GM12878 (cell line): ENCODE measurements at regions of chr1 and their contacts with region 1.

Region 1: GRCh38 chr1:62436466-62437256 is at the start of gene USP1:
- DNase-seq: peak; percentile 99
- ATAC-seq: peak; percentile 85
- H3K4me3 ChIP-seq: peak within 1 kb of the TSS; percentile 88
- H3K27ac ChIP-seq: peak within 1 kb of the TSS; percentile 95
- H3K4me1 ChIP-seq: no peaks in the 10 kb centered on the region
- H3K27me3 ChIP-seq: no peaks in the 10 kb centered on the region
- CTCF ChIP-seq: no peak
- EP300 ChIP-seq: 0 out of 4 replicates have a peak, but pooled peaks of 1 of the 2 experiments have one; percentile 7
- POLR2A ChIP-seq: peak; percentile 92
- RAD21 ChIP-seq: no peak
- polyA plus RNA-seq, gene USP1: 28.0 to 35.9 TPM

Region 2: DNA sequence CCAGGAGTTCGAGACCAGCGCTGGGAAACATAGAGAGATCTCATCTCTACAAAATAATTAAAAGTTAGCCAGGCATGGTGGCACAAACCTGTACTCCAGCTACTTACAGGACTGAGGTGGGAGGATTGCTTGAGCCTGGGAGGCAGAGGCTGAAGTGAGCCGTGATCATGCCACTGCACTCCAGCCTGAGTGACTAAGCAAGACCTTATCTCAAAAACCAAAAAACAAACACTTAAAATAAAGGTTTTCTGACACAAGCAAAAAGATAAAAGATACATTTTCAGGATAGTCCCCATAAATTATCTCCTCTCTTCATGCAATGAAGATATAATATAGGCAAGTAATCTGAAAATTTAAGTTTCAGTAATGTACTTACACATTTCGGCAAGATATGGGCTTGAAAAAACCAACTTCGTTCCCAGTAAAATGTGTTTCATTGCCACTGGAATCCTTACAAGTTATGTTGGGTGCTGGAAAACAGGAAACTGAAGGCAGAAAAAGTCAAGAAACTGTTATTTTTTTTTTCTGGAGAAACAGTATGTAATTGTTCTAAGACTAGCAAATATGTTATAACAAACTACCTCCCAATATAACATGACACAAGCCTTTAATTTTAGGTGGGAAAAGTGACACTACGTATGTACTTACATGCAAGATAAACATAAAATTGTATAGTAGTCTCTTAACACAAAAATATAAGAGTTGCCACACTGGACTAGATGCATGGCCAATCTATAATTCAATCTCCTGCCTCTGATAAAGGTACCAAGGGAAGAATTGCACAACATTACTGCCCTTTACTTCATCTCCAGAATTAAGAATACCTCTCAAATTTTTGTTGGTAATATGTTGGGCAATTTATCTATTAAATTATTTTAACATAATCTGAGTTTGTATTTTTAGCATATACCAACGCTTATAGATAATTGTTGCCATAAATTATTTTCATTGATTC is 727.4 kb before region 1 on chr1:
- CTCF ChIA-PET with region 1: no interaction called
- POLR2A ChIA-PET with region 1: no interaction called
- RAD21 ChIA-PET with region 1: no interaction called
- SMC1A ChIA-PET with region 1: no interaction called
- in situ Hi-C with region 1: no loop called
- intact Hi-C with region 1: no loop called
- DNase-seq: no peak
- ATAC-seq: no peak
- H3K4me3 ChIP-seq: no peak overlapping the region
- H3K27ac ChIP-seq: no peak overlapping the region
- H3K4me1 ChIP-seq: no peaks in the 10 kb centered on the region
- H3K27me3 ChIP-seq: no peaks in the 10 kb centered on the region
- CTCF ChIP-seq: no peak
- EP300 ChIP-seq: no peak
- POLR2A ChIP-seq: no peak
- RAD21 ChIP-seq: no peak

Region 3: DNA sequence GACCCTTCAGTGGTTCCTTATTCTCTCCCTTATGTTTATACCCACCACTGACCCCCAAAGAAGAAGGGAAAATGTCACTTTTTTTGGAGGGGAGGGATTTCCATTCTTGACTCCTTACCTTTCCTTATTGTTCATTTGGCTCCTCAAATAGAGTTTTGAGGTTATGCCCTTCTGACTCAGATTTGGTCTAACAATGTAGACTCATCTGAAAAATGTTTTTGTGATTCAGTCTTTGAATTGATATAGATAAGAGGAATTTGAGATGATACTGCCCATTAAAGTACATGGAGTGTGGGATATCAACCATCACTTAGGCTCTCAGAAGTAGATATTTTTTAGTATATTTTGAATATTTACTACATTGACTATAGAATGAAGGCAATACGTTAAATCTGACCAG is 16.3 kb after region 1 on chr1:
- CTCF ChIA-PET with region 1: interaction called, 6 read pairs
- POLR2A ChIA-PET with region 1: interaction called, 7 read pairs
- RAD21 ChIA-PET with region 1: interaction called, 3 read pairs
- SMC1A ChIA-PET with region 1: interaction called, 20 read pairs
- in situ Hi-C with region 1: no loop called
- intact Hi-C with region 1: no loop called
- DNase-seq: no peak
- ATAC-seq: no peak
- H3K4me3 ChIP-seq: no peak overlapping the region
- H3K27ac ChIP-seq: no peak overlapping the region
- H3K4me1 ChIP-seq: peaks cover 7% of the 10 kb centered on the region; the same call in 1 of the 2 replicates
- H3K27me3 ChIP-seq: no peaks in the 10 kb centered on the region
- CTCF ChIP-seq: no peak
- EP300 ChIP-seq: no peak
- POLR2A ChIP-seq: no peak
- RAD21 ChIP-seq: no peak

Region 4: GRCh38 chr1:62500210-62500609 is 63.5 kb after region 1 on chr1:
- CTCF ChIA-PET with region 1: no interaction called
- POLR2A ChIA-PET with region 1: no interaction called
- RAD21 ChIA-PET with region 1: no interaction called
- SMC1A ChIA-PET with region 1: no interaction called
- in situ Hi-C with region 1: no loop called
- intact Hi-C with region 1: no loop called
- DNase-seq: no peak
- ATAC-seq: no peak
- H3K4me3 ChIP-seq: no peak overlapping the region
- H3K27ac ChIP-seq: no peak overlapping the region
- H3K4me1 ChIP-seq: no peaks in the 10 kb centered on the region
- H3K27me3 ChIP-seq: no peaks in the 10 kb centered on the region
- CTCF ChIP-seq: no peak
- EP300 ChIP-seq: no peak
- POLR2A ChIP-seq: no peak
- RAD21 ChIP-seq: no peak

Region 5: DNA sequence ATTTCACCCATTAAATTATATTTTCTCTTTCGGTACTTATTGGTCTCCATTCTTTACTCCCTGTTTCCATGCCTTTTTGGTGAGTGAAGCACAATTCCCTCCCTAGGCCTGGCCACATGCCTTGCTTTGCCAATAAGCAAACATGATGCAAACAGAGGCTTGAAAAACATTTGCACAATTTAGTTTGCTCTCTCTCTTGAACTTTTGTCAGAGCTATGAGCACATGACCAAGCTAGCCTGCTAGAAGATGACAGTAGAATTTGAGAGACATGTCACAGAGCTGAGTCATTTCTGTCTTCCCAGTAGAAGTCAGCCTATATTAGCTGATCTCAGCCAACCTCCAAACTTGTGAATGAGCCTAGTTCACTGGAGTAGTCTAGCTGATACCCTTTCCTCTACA is 185.2 kb after region 1 on chr1:
- CTCF ChIA-PET with region 1: no interaction called
- POLR2A ChIA-PET with region 1: no interaction called
- RAD21 ChIA-PET with region 1: interaction called, 3 read pairs
- SMC1A ChIA-PET with region 1: interaction called, 3 read pairs
- in situ Hi-C with region 1: no loop called
- intact Hi-C with region 1: loop called (anchors 5 kb)
- DNase-seq: peak; percentile 60
- ATAC-seq: peak; percentile 94
- H3K4me3 ChIP-seq: no peak overlapping the region
- H3K27ac ChIP-seq: no peak overlapping the region
- H3K4me1 ChIP-seq: no peaks in the 10 kb centered on the region; the same call in 1 of the 2 replicates
- H3K27me3 ChIP-seq: no peaks in the 10 kb centered on the region
- CTCF ChIP-seq: no peak
- EP300 ChIP-seq: peak; percentile 46 to 55; a peak in 2 of 4 replicates
- POLR2A ChIP-seq: no peak
- RAD21 ChIP-seq: no peak

Region 6: DNA sequence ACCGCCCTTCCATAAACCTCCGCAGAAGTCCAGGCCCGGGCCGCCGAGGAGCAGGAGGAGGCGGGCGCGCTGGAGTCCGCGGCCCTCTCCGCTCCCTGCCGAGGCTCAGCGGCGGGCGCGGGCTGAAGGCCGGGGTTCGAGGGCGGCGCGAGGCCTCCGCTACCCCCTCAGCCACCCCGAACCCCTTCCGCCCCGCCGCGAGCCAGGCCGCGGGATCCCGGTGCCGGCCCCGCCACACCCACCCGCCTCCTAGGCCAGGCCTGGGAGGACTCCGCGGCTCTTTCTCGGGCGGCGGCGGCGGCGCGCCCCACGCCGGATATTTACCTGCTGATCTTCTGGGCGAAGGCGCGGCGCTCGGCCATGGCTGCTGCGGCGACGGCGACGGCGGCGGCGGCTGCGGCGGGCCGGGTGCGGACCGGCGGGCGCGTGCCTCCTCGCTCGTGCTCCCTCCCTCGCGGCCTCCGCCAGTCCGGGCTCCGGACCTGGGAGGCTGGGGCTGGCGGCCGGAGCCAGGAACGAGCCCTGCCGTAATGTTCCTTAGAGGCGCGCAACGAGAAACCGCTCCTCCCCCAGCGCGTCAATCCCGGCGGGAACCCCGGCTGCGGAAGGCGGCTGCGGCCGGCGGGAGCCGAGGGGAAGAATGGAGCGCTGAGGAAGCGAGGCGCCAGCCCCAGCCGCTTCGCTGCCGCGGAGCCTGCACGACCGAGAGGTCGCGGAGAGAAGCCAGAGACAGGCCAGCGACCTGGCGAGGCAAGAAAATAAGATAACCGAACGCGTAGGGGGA is 251.4 kb after region 1 on chr1 and contains the start of gene DOCK7:
- CTCF ChIA-PET with region 1: no interaction called
- POLR2A ChIA-PET with region 1: no interaction called
- RAD21 ChIA-PET with region 1: interaction called, 3 read pairs
- SMC1A ChIA-PET with region 1: interaction called, 7 read pairs
- in situ Hi-C with region 1: no loop called
- intact Hi-C with region 1: loop called (anchors 2 kb)
- DNase-seq: no peak
- ATAC-seq: peak; percentile 77
- H3K4me3 ChIP-seq: peak within 1 kb of the TSS; percentile 87
- H3K27ac ChIP-seq: peak within 1 kb of the TSS; percentile 83
- H3K4me1 ChIP-seq: peaks cover 4% of the 10 kb centered on the region; the same call in 1 of the 2 replicates
- H3K27me3 ChIP-seq: no peaks in the 10 kb centered on the region
- CTCF ChIP-seq: no peak
- EP300 ChIP-seq: no peak
- POLR2A ChIP-seq: peak; percentile 77
- RAD21 ChIP-seq: no peak
- polyA plus RNA-seq, gene DOCK7: 4.8 to 7.0 TPM

Region 7: GRCh38 chr1:62725255-62725654 is 288.6 kb after region 1 on chr1:
- CTCF ChIA-PET with region 1: interaction called, 3 read pairs
- POLR2A ChIA-PET with region 1: no interaction called
- RAD21 ChIA-PET with region 1: no interaction called
- SMC1A ChIA-PET with region 1: interaction called, 6 read pairs
- in situ Hi-C with region 1: no loop called
- intact Hi-C with region 1: loop called (anchors 5 kb)
- DNase-seq: peak; percentile 19
- ATAC-seq: peak; percentile 42
- H3K4me3 ChIP-seq: 0 out of 2 replicates have a peak overlapping the region, but pooled peaks have one; percentile 7
- H3K27ac ChIP-seq: no peak overlapping the region
- H3K4me1 ChIP-seq: 0 out of 2 replicates have a peak, but pooled peaks cover 5% of the 10 kb centered on the region
- H3K27me3 ChIP-seq: no peaks in the 10 kb centered on the region
- CTCF ChIP-seq: no peak
- EP300 ChIP-seq: no peak
- POLR2A ChIP-seq: no peak
- RAD21 ChIP-seq: no peak

Region 8: DNA sequence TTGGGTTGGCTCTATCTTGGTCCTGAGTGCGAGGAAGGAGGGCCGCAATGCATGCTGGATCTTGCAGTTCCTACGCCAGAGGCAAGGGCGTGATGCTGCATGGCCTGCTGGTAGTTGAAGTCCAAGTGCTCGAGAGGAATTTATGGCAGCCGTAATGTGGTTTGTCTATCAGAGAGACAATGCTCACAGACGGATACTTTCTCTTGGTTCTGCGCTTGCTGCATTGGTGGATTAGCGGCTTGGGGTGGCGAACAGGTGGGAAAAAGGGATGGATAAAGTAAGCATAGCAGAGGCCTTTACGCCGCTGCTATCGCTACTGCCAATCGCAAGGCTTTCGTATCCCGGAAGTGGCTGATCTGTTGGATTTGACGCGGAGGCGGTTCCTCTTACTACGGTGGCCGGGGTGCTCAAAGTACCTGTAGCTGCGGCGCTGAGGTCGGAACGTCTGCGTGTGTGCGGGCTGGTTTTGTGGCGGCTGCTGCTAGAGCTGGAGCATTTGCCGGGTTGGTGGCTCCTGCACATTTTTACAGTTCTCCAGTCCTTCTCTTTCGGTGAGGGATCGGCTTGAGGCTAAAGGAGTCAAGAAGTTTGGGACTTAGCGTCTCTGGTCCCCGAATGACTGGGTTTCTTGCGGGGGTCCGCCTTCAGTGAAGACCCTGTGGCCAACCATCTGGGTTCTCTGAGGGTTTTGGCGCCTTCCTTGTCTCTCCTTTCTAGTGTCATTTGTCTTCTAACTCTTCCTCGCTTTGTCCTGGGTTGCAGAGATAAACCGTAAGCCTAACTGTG is 347.3 kb after region 1 on chr1 and contains the start of gene ATG4C:
- CTCF ChIA-PET with region 1: no interaction called
- POLR2A ChIA-PET with region 1: no interaction called
- RAD21 ChIA-PET with region 1: interaction called, 5 read pairs
- SMC1A ChIA-PET with region 1: no interaction called
- in situ Hi-C with region 1: no loop called
- intact Hi-C with region 1: loop called (anchors 5 kb)
- DNase-seq: peak; percentile 96
- ATAC-seq: peak; percentile 94
- H3K4me3 ChIP-seq: peak within 1 kb of the TSS; percentile 100
- H3K27ac ChIP-seq: peak within 1 kb of the TSS; percentile 94
- H3K4me1 ChIP-seq: no peaks in the 10 kb centered on the region
- H3K27me3 ChIP-seq: no peaks in the 10 kb centered on the region
- CTCF ChIP-seq: no peak
- EP300 ChIP-seq: 0 out of 4 replicates have a peak, but pooled peaks of 1 of the 2 experiments have one; percentile 29
- POLR2A ChIP-seq: peak; percentile 92
- RAD21 ChIP-seq: no peak
- polyA plus RNA-seq, gene ATG4C: 21.3 to 30.9 TPM